PC-9 (cell line): ENCODE measurements at regions of chr2 and their contacts with region 1.

Region 1: GRCh38 chr2:175111200-175111657 is 56.8 kb downstream of the ATF2 start:
- DNase-seq: peak in 1 of 2 experiments; percentile 59
- H3K4me3 ChIP-seq: no peak overlapping the region
- H3K27ac ChIP-seq: no peak overlapping the region
- H3K4me1 ChIP-seq: no peaks in the 10 kb centered on the region
- H3K27me3 ChIP-seq: no peaks in the 10 kb centered on the region
- CTCF ChIP-seq: peak; percentile 98

Region 2: GRCh38 chr2:175326801-175327200 is 215.6 kb after region 1 on chr2:
- CTCF ChIA-PET with region 1: no interaction called
- POLR2A ChIA-PET with region 1: no interaction called
- intact Hi-C with region 1: loop called (anchors 1 kb)
- DNase-seq: no peak
- H3K4me3 ChIP-seq: no peak overlapping the region
- H3K27ac ChIP-seq: no peak overlapping the region
- H3K4me1 ChIP-seq: no peaks in the 10 kb centered on the region
- H3K27me3 ChIP-seq: peaks cover 39% of the 10 kb centered on the region; the same call in 1 of the 2 replicates
- CTCF ChIP-seq: no peak